HEK293 (cell line): ENCODE measurements at regions of chr1 and their contacts with region 1.

Region 1: DNA sequence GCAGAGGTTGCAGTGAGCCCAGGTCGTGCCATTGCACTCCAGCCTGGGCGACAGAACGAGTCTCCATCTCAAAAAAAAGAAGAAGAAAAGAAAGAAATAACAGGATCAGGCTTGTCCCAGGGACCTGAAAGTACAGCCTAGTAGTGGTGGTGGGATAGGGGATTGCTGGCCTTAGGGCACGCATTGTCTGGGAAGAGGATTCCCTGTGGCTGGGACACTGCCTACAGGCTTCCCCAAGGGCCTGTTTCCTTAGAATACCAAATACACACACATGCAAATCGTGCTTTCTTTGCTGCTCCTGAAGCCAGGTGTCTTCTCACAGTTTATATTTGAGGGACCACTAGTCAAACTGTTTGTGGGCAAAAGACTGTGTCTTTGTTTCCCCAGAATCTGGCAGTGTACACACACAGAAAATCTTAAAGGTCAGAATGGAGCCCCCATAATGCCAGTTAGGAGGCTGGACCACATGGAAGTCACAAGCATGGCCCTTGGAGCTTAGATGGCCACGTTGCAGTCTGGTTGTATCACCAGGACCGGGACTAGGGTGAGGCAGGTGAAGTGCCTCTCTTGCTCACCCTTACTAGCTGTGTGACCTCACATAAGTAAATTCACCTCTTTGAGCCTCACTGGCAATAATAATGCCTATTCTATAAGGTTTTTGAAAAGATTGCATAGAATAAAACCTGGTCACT is 12.7 kb upstream of the ASAP3 start:
- H3K4me3 ChIP-seq: no peak overlapping the region
- H3K27ac ChIP-seq: no peak overlapping the region
- H3K4me1 ChIP-seq: no peaks in the 10 kb centered on the region
- CTCF ChIP-seq: no peak

Region 2: DNA sequence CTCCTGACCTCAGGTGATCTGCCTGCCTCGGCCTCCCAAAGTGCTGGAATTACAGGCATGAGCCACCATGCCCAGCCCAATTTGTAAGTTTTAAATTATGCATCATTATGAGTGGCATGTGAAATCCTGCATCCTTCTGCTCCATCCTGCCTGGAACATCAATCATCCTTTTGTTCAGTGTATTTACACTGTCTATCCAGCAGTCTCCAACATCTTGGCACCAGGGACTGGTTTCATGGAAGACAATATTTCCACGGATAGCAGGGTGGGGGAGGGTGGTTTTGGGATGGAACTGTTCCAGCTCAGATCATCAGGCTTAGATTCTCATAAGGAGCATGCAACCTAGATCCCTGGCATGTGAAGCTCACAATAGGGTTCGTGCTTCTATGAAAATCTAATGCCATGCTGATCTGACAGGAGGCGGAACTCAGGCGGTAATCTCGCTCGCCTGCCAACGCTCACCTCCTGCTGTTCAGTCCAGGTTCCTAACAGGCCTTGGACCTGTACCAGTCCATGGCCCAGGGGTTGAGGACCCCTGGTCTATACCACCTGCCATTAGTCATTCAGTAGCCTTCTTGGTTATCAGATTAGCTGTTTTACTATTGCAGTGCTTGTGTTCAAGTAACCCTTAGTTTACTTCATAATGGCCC is 49.9 kb before region 1 on chr1:
- CTCF ChIA-PET with region 1: interaction called, 11 read pairs
- POLR2A ChIA-PET with region 1: no interaction called
- H3K4me3 ChIP-seq: no peak overlapping the region
- H3K27ac ChIP-seq: no peak overlapping the region
- H3K4me1 ChIP-seq: no peaks in the 10 kb centered on the region
- CTCF ChIP-seq: no peak

Region 3: GRCh38 chr1:23507507-23507906 is 10.9 kb after region 1 on chr1:
- CTCF ChIA-PET with region 1: interaction called, 61 read pairs
- POLR2A ChIA-PET with region 1: interaction called, 6 read pairs
- H3K4me3 ChIP-seq: no peak overlapping the region
- H3K27ac ChIP-seq: no peak overlapping the region
- H3K4me1 ChIP-seq: no peaks in the 10 kb centered on the region
- CTCF ChIP-seq: no peak

Region 4: GRCh38 chr1:23524716-23525401 is 28.2 kb after region 1 on chr1:
- CTCF ChIA-PET with region 1: interaction called, 36 read pairs
- POLR2A ChIA-PET with region 1: interaction called, 7 read pairs
- H3K4me3 ChIP-seq: no peak overlapping the region
- H3K27ac ChIP-seq: no peak overlapping the region; the same call in 1 of the 2 replicates
- H3K4me1 ChIP-seq: peaks cover 11% of the 10 kb centered on the region
- CTCF ChIP-seq: no peak

Region 5: GRCh38 chr1:23539698-23540266 is 43.1 kb after region 1 on chr1:
- CTCF ChIA-PET with region 1: interaction called, 149 read pairs
- POLR2A ChIA-PET with region 1: interaction called, 21 read pairs
- H3K4me3 ChIP-seq: no peak overlapping the region
- H3K27ac ChIP-seq: no peak overlapping the region
- H3K4me1 ChIP-seq: no peaks in the 10 kb centered on the region
- CTCF ChIP-seq: peak; percentile 95